HEK293 (cell line): ENCODE measurements at regions of chr12 and their contacts with region 1.

Region 1: DNA sequence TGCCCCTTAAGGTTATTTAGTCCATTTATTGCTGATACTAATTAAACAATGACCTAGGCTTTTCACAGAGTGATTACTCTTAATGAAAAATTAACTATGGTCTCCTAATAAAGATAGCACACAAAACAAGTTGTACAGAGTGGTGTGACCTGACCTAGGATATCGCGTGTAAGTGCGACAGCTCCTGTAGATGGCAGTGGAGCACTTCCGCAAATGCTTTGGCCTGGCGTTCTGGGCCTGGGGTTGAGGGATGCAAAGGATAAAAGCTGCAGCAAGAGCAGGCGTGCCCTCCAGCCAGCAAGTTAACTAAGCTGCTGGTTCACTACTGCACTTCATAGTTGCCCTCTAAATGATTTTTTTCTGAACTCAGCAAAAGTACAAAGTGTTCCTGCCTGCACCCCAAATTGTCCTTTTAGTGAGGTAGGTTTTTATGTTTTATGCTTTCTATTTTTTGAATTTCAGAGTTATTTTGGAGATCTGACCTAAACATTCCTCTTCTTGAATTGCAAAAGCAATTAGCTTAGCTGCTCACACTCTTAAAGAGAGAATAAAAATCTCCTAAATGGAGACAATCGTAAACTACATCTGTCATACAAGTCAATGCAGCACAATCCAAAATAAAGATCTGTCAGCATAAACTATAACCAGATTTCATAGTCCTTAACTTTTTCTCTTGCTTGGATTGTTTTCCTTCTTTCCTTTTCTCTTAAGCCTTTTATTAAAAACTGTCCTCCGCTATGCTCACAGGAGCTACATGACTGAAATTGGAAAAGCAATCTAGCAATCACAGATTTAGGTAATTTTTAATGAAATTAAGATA is 379.6 kb downstream of the LRIG3 start:
- H3K4me3 ChIP-seq: no peak overlapping the region
- H3K27ac ChIP-seq: no peak overlapping the region
- H3K4me1 ChIP-seq: no peaks in the 10 kb centered on the region
- CTCF ChIP-seq: peak; percentile 77

Region 2: DNA sequence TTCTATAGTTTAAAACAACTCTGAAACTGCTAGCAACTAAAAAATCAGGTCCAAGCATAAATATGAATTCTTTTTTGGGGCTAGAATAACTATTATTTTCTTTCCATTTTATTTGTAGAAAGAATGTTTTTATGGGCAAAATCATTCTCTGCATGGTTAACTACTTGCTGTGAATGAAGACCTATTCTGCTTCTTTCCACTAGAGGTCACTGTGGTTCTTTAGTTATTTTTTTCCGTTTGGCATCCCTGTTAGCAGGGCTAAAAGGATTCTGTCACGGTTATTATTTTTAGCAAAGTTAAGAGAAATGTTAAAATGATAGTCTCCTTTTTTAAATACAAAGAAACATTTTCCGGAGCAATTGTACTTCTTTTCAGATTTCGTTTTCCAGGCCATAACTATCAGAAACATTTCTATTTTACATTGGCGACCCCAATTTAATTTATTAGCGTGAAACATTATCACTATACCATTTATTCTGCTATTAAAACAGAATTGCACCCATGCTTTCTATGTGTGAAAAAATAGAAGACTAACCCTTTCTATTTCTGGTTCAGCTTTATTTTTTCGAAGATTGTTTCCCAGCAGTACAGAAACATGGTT is 194.6 kb before region 1 on chr12:
- CTCF ChIA-PET with region 1: interaction called, 29 read pairs
- POLR2A ChIA-PET with region 1: no interaction called
- H3K4me3 ChIP-seq: no peak overlapping the region
- H3K27ac ChIP-seq: no peak overlapping the region
- H3K4me1 ChIP-seq: no peaks in the 10 kb centered on the region
- CTCF ChIP-seq: 0 out of 2 replicates have a peak, but pooled peaks have one; percentile 15

Region 3: GRCh38 chr12:58443273-58443980 is 97.3 kb before region 1 on chr12:
- CTCF ChIA-PET with region 1: interaction called, 14 read pairs
- POLR2A ChIA-PET with region 1: no interaction called
- H3K4me3 ChIP-seq: no peak overlapping the region
- H3K27ac ChIP-seq: no peak overlapping the region
- H3K4me1 ChIP-seq: no peaks in the 10 kb centered on the region
- CTCF ChIP-seq: no peak

Region 4: DNA sequence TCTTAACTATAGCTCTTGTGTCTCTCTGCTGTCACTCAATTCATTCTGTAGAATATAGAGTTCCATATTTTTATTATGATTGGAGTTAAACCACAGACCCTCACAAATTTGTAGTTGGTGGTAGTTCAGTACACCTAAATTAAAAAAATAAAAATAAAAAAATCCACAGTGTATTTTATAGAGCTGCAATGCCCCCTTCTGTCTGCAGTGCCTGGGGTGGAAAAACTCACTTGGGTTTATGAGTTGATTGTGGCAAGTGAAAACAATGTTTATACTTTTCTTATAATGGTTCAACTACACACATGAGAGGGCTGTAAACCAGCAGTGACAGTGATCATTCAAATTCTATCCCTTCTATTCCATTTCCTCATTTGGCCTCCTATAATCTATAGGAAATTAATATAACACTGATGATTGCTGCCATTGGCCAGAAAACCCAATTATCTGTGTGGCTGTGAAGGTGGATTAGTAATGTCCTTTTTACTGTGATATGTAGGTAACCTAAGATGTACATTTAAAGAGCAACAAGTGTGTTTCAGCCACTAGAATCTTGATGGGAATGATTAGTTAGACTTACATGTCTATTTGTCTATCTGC is 546.5 kb after region 1 on chr12:
- CTCF ChIA-PET with region 1: interaction called, 24 read pairs
- POLR2A ChIA-PET with region 1: no interaction called
- H3K4me3 ChIP-seq: no peak overlapping the region
- H3K27ac ChIP-seq: no peak overlapping the region
- H3K4me1 ChIP-seq: peaks cover 22% of the 10 kb centered on the region
- CTCF ChIP-seq: peak; percentile 45; the same call in 1 of the 2 replicates

Region 5: GRCh38 chr12:59149997-59150642 is 609.4 kb after region 1 on chr12:
- CTCF ChIA-PET with region 1: interaction called, 48 read pairs
- POLR2A ChIA-PET with region 1: no interaction called
- H3K4me3 ChIP-seq: no peak overlapping the region
- H3K27ac ChIP-seq: no peak overlapping the region
- H3K4me1 ChIP-seq: no peaks in the 10 kb centered on the region
- CTCF ChIP-seq: peak; percentile 90